Posterior vena cava (tissue), 2 donors: ENCODE measurements at regions of chr18 and their contacts with region 1.

Region 1: GRCh38 chr18:12038639-12039417 is 54.8 kb upstream of the ANKRD62 start:
- DNase-seq: peak; percentile 95

Region 2: GRCh38 chr18:11937874-11938478 is 100.9 kb before region 1 on chr18:
- intact Hi-C with region 1: loop called (anchors 2 to 10 kb)
- DNase-seq: peak; percentile 89